ENCODE measurements at regions of chr16 and their contacts with region 1.

Region 1: GRCh38 chr16:48556913-48557351 is 53.0 kb downstream of the N4BP1 start:
- DNase-seq: no peak
- ATAC-seq: peak; percentile 63
- H3K4me3 ChIP-seq: no peak overlapping the region
- H3K4me3 Mint-ChIP-seq: peak overlapping the region in 6 of 10 donors; percentile 12 to 78 (median 30)
- H3K27ac ChIP-seq: no peak overlapping the region
- H3K27ac Mint-ChIP-seq: peak overlapping the region in 7 of 9 donors; percentile 0 to 84 (median 63)
- H3K4me1 ChIP-seq: peaks cover 19 to 24% of the 10 kb centered on the region in 2 donors
- H3K4me1 Mint-ChIP-seq: peaks cover 45 to 92% (median 80%) of the 10 kb centered on the region in 7 donors
- H3K27me3 ChIP-seq: no peaks in the 10 kb centered on the region
- H3K27me3 Mint-ChIP-seq: no peaks in the 10 kb centered on the region

Region 2: GRCh38 chr16:48231727-48232492 is 325.0 kb before region 1 on chr16:
- CTCF ChIA-PET with region 1: no interaction called
- POLR2A ChIA-PET with region 1: no interaction called
- intact Hi-C with region 1: loop called in 1 of 2 experiments (anchors 10 kb)
- DNase-seq: peak in 4 of 9 donors; percentile 3 to 25 (median 15)
- ATAC-seq: peak; percentile 63
- H3K4me3 ChIP-seq: no peak overlapping the region
- H3K4me3 Mint-ChIP-seq: no peak overlapping the region
- H3K27ac ChIP-seq: no peak overlapping the region
- H3K27ac Mint-ChIP-seq: peak overlapping the region in 3 of 9 donors; percentile 31 to 62 (median 56)
- H3K4me1 ChIP-seq: no peaks in the 10 kb centered on the region
- H3K4me1 Mint-ChIP-seq: peaks cover 0 to 21% (median 0%) of the 10 kb centered on the region in 7 donors
- H3K27me3 ChIP-seq: no peaks in the 10 kb centered on the region
- H3K27me3 Mint-ChIP-seq: peaks cover 6 to 10% (median 7%) of the 10 kb centered on the region in 5 donors

Measured in naive thymus-derived CD4-positive, alpha-beta T cell (primary cell).